A673 (cell line): ENCODE measurements at regions of chr9 and their contacts with region 1.

Region 1: GRCh38 chr9:81848472-81848871 is 79.8 kb upstream of the SPATA31D4 start:
- DNase-seq: no peak
- H3K4me3 ChIP-seq: no peak overlapping the region
- H3K27ac ChIP-seq: no peak overlapping the region
- H3K4me1 ChIP-seq: no peaks in the 10 kb centered on the region
- H3K27me3 ChIP-seq: no peaks in the 10 kb centered on the region
- CTCF ChIP-seq: no peak

Region 2: DNA sequence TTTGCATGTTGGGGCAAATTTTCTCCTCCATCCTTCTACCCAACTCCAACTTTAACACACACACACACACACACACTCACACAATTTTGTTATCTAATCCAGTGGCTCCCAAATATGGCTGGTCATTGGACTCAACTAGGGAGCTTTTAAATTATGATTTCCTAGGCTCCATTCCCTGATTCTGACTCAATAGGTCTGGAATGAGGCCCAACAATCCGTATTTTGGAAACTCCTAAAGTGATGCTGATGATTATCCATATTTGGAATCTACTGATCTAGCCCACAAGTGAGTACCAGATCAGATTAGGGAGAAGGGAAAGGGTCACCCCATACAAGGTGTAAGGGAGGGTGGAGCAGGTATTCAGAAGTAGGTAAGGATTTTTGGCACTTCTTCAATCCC is 468.8 kb before region 1 on chr9:
- CTCF ChIA-PET with region 1: no interaction called
- POLR2A ChIA-PET with region 1: no interaction called
- intact Hi-C with region 1: no loop called
- DNase-seq: no peak
- H3K4me3 ChIP-seq: no peak overlapping the region
- H3K27ac ChIP-seq: no peak overlapping the region
- H3K4me1 ChIP-seq: no peaks in the 10 kb centered on the region
- H3K27me3 ChIP-seq: no peaks in the 10 kb centered on the region
- CTCF ChIP-seq: no peak

Region 3: DNA sequence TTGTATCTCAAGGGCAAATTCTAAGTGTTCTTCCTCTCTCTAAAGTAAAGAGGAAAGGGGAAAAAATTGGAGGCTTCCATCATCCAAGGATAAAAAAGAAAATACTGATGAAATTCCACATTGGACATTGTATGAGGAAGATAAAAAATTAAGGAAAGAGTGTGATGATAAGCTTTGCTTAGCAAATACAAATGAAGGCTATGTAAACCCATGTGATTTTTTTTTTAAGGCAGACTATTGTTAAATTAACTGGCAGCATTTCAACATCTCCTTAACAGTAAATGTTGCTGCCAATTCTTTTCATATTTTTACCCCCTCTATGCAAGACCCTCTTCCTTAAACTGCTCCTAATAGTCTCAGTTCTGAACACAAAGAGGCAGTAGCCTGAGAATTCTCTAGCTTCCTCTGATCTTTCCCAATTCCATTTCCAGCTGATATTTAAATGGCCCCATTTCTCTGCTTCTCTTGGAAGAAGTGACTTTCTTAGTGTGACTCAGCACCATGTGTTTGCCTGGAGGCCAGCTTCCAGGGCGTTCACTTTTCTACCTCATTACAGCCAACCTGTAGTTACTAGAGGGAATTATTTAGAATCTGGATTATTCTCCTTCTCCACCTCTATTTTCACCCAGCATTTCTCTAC is 318.8 kb before region 1 on chr9:
- CTCF ChIA-PET with region 1: no interaction called
- POLR2A ChIA-PET with region 1: no interaction called
- intact Hi-C with region 1: loop called (anchors 10 kb)
- DNase-seq: no peak
- H3K4me3 ChIP-seq: no peak overlapping the region
- H3K27ac ChIP-seq: no peak overlapping the region
- H3K4me1 ChIP-seq: no peaks in the 10 kb centered on the region
- H3K27me3 ChIP-seq: no peaks in the 10 kb centered on the region
- CTCF ChIP-seq: no peak